Activated CD4-positive, alpha-beta T cell treated with anti-CD3 and anti-CD28 coated beads for 36 hours (primary cell): ENCODE measurements at regions of chr6 and their contacts with region 1.

Region 1: DNA sequence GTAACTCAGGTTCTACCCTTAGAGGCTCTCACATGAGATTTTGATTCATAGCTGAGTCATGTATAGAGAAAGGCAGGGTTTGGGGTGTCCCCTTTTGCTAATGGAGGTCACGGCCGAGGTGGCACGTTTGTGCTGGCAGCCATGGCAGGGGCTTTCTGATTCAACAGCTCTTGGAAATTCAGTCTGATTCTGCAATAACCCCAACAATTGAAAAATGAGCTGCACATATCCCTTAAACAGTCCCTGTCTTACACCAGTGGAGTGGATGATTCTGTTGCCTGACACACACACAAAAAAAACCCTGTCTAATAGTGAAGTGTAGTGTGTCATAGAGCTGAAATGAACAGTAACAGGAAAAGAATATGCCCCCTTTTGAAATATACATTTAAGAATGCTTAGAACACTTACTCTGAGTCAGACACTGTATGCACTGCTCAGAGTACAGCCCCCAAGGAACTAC is 40.4 kb upstream of the ARG1 start:
- DNase-seq: peak; percentile 81
- ATAC-seq: peak; percentile 94
- H3K4me3 Mint-ChIP-seq: no peak overlapping the region
- H3K27ac Mint-ChIP-seq: peak overlapping the region; percentile 81
- H3K4me1 Mint-ChIP-seq: peaks cover 51% of the 10 kb centered on the region
- H3K27me3 Mint-ChIP-seq: no peaks in the 10 kb centered on the region

Region 2: DNA sequence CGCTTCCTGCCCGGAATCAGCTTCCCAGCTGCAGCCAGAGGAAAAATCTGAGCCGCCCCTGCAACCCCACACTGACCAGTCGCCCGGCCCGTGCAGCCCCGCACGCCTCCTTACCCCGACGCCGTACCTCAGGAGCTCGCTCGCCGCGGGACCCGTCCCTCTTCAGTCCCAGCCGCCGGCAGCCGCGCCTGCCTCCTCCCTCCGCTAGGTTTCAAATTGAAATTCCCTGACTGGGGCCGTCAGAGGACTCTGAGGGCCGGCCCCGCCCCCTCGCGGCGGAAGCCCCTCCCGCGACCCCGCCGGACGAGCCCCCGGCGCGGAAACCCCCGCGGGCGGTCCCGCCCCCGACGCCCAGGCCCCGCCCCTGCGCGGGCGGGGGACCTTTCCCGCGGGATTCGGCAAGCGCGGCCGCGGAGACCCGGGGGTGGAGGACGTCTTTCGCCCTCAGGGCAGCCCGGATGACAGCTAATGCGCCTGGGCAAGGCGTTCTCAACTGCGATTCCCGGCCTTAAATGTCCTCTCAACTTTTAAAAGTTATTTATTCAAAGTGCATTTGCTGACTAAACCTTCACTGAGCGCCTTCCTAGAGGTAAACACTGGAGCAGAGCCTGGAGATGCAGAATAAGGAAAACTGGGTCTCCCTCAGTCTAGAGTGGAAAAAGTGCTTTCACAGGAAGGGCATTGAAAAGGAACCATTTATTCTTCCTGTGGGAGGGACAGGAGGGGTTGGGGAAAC is 469.4 kb before region 1 on chr6 and contains the start of gene EPB41L2:
- CTCF ChIA-PET with region 1: no interaction called
- POLR2A ChIA-PET with region 1: no interaction called
- intact Hi-C with region 1: loop called in 1 of 2 experiments (anchors 2 kb)
- DNase-seq: peak; percentile 86
- ATAC-seq: peak; percentile 90
- H3K4me3 Mint-ChIP-seq: peak within 1 kb of the TSS; percentile 78
- H3K27ac Mint-ChIP-seq: peak within 1 kb of the TSS; percentile 76
- H3K4me1 Mint-ChIP-seq: peaks cover 28% of the 10 kb centered on the region
- H3K27me3 Mint-ChIP-seq: no peaks in the 10 kb centered on the region
- total RNA-seq, gene EPB41L2: 33.3 to 43.4 TPM

Region 3: GRCh38 chr6:131135244-131136020 is 397.2 kb before region 1 on chr6 and contains the start of gene AKAP7:
- CTCF ChIA-PET with region 1: interaction called, 8 read pairs
- POLR2A ChIA-PET with region 1: no interaction called
- intact Hi-C with region 1: loop called in 1 of 2 experiments (anchors 5 kb)
- DNase-seq: peak; percentile 76
- ATAC-seq: peak; percentile 81
- H3K4me3 Mint-ChIP-seq: peak within 1 kb of the TSS; percentile 91
- H3K27ac Mint-ChIP-seq: peak within 1 kb of the TSS; percentile 97
- H3K4me1 Mint-ChIP-seq: peaks cover 12% of the 10 kb centered on the region
- H3K27me3 Mint-ChIP-seq: no peaks in the 10 kb centered on the region
- total RNA-seq, gene AKAP7: 5.1 to 6.0 TPM

Region 4: GRCh38 chr6:131199568-131200272 is 332.9 kb before region 1 on chr6:
- CTCF ChIA-PET with region 1: interaction called, 29 read pairs
- POLR2A ChIA-PET with region 1: no interaction called
- intact Hi-C with region 1: loop called (anchors 1 kb)
- DNase-seq: peak; percentile 79
- ATAC-seq: peak; percentile 94
- H3K4me3 Mint-ChIP-seq: peak overlapping the region; percentile 69
- H3K27ac Mint-ChIP-seq: peak overlapping the region; percentile 90
- H3K4me1 Mint-ChIP-seq: peaks cover 55% of the 10 kb centered on the region
- H3K27me3 Mint-ChIP-seq: no peaks in the 10 kb centered on the region

Region 5: GRCh38 chr6:131683479-131683878 is 150.9 kb after region 1 on chr6:
- CTCF ChIA-PET with region 1: no interaction called
- POLR2A ChIA-PET with region 1: no interaction called
- intact Hi-C with region 1: no loop called
- DNase-seq: peak; percentile 13
- ATAC-seq: no peak
- H3K4me3 Mint-ChIP-seq: no peak overlapping the region
- H3K27ac Mint-ChIP-seq: no peak overlapping the region
- H3K4me1 Mint-ChIP-seq: peaks cover 13% of the 10 kb centered on the region
- H3K27me3 Mint-ChIP-seq: no peaks in the 10 kb centered on the region

Region 6: DNA sequence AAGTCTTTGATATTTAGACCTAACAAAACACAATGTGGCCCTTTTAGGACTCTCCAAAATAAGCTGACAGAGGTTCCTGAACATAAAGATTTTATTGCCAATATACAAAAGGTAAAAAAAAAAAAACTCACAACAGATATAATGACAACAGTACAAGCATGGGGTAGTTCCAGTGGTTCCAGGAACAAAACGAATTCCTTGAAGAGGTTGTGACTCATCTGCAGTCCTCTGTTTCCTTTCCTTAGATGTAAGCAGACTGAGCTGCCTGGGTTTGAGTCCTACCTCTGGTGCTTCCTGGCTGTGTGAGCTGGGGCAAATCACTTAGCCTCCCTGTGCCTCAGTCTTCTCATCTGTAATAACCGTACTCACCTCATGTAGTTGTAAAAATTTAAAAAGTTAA is 191.5 kb after region 1 on chr6:
- CTCF ChIA-PET with region 1: no interaction called
- POLR2A ChIA-PET with region 1: no interaction called
- intact Hi-C with region 1: no loop called
- DNase-seq: no peak
- ATAC-seq: no peak
- H3K4me3 Mint-ChIP-seq: no peak overlapping the region
- H3K27ac Mint-ChIP-seq: no peak overlapping the region
- H3K4me1 Mint-ChIP-seq: no peaks in the 10 kb centered on the region
- H3K27me3 Mint-ChIP-seq: no peaks in the 10 kb centered on the region